MCF 10A (cell line): ENCODE measurements at regions of chr19 and their contacts with region 1.

Region 1: DNA sequence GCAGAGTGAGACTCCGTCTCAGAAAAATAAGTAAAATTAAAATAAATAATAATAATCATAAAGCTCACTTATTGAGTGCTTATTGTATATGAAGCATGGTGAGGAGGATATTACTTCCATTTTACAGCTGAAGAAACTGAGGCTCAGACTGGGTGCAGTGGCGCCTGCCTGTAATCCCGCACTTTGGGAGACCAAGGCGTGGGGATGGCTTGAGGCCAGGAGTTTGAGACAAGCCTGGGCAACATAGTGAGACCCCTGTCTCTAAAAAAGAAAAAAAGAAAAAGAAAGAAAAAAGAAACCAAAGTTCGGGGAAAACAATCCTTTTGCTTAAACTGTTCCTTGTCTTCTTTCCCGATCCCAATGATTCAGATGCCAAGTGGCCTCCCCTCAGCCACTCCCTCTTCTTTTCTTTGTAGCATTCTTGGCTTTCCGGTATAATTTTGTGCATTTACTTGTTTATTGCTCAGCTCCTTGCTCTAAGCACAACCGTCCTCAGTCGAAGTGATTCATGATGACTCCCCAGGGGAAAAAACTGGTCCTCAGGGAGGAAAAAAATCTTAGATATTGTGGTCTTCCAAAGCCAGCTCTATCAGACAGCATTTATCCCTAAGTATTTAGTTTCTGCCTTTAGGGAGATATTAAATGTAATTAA is 965 bp upstream of the EIF3G start:
- DNase-seq: peak; percentile 68
- H3K4me3 Mint-ChIP-seq: peak overlapping the region; percentile 41
- H3K27ac Mint-ChIP-seq: no peak overlapping the region
- H3K4me1 Mint-ChIP-seq: peaks cover 6% of the 10 kb centered on the region
- H3K27me3 Mint-ChIP-seq: no peaks in the 10 kb centered on the region
- CTCF ChIP-seq: no peak

Region 2: DNA sequence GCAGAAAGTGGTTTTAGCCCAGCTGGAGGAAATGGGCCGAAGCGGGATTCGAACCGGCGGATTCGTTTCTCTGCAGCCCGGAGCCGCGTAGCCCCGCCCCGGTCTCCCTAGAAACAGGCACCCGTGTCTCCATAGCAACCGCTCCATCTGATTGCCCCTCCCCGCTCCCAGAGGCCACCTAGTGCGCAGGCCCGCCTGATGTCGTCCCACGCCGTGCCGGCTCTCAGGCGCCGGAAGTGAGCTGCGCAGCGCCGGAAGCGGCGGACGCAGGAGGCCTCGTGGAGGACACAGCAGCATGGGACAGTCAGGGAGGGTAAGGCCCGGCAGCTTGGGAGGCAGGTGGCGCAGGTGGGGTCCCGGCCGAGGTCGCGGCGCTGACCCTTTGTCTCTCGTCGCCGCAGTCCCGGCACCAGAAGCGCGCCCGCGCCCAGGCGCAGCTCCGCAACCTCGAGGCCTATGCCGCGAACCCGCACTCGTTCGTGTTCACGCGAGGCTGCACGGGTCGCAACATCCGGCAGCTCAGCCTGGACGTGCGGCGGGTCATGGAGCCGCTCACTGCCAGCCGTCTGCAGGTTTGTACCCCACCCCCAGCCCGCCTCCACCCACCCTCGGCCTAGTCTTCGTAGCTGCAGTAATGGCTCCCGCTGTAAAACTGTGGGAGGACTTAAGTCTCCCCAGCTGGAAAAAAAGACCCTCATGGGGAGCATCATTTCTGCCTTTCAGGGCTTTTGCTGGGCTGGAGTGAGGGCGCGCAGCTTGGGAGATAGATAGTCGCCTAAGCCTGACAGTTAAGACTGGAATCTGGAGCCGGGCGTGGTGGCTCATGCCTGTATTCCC is 14.3 kb before region 1 on chr19 and contains the start of gene PPAN:
- CTCF ChIA-PET with region 1: interaction called, 7 read pairs
- POLR2A ChIA-PET with region 1: interaction called, 24 read pairs
- intact Hi-C with region 1: no loop called
- DNase-seq: peak; percentile 99
- H3K4me3 Mint-ChIP-seq: peak within 1 kb of the TSS; percentile 88
- H3K27ac Mint-ChIP-seq: peak within 1 kb of the TSS; percentile 91
- H3K4me1 Mint-ChIP-seq: peaks cover 9% of the 10 kb centered on the region
- H3K27me3 Mint-ChIP-seq: no peaks in the 10 kb centered on the region
- CTCF ChIP-seq: no peak
- total RNA-seq, gene PPAN: 95.0 and 123 TPM in 2 replicates

Region 3: GRCh38 chr19:10155839-10156238 is 35.2 kb after region 1 on chr19:
- CTCF ChIA-PET with region 1: no interaction called
- POLR2A ChIA-PET with region 1: no interaction called
- intact Hi-C with region 1: no loop called
- DNase-seq: peak; percentile 11
- H3K4me3 Mint-ChIP-seq: no peak overlapping the region
- H3K27ac Mint-ChIP-seq: no peak overlapping the region
- H3K4me1 Mint-ChIP-seq: no peaks in the 10 kb centered on the region
- H3K27me3 Mint-ChIP-seq: no peaks in the 10 kb centered on the region
- CTCF ChIP-seq: no peak